Activated CD8-positive, alpha-beta T cell treated with anti-CD3 and anti-CD28 coated beads for 36 hours (primary cell): ENCODE measurements at regions of chr16 and their contacts with region 1.

Region 1: GRCh38 chr16:22077700-22078313 is 14.5 kb upstream of the VWA3A start:
- DNase-seq: peak; percentile 89
- ATAC-seq: peak; percentile 67
- H3K4me3 Mint-ChIP-seq: no peak overlapping the region
- H3K27ac Mint-ChIP-seq: no peak overlapping the region
- H3K4me1 Mint-ChIP-seq: peaks cover 2% of the 10 kb centered on the region
- H3K27me3 Mint-ChIP-seq: no peaks in the 10 kb centered on the region
- CTCF ChIP-seq: peak; percentile 93

Region 2: DNA sequence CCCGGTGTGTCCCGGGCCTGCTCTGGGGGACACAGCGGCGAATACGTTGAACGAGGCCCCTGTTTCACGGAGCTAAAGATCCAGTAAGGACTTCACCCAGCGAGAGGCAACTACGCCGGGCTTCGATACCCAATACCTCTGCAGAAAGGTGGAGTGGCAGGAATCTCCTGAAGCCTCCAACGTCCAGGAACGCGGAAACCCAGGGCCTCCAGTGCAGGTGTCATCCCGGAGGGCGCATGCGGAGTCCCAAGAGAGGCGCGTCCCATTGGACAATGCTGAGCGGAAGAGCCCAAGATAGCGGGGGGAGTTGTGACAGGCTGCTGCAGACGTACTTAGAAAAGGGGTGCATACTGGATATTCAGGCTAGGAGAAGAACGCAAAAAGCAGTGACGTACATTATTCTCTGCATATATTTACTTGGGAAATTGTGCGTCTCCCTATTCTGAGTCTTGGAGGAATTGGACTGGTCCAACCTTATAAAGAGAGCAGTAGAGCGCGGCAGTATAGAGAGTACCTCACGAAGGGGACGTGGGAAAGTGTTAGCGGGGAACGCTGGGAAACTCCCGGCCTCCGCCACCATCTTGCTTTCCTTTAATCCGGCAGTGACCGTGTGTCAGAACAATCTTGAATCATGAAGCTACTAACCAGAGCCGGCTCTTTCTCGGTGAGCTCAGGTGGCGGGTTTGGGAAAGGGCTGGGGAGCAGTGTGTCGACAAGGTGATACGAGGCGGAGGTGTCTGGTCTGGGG is 124.8 kb before region 1 on chr16 and contains the start of gene UQCRC2:
- CTCF ChIA-PET with region 1: interaction called, 19 read pairs
- POLR2A ChIA-PET with region 1: interaction called, 3 read pairs
- intact Hi-C with region 1: no loop called
- DNase-seq: peak; percentile 94
- ATAC-seq: peak; percentile 93
- H3K4me3 Mint-ChIP-seq: peak within 1 kb of the TSS; percentile 100
- H3K27ac Mint-ChIP-seq: peak within 1 kb of the TSS; percentile 98
- H3K4me1 Mint-ChIP-seq: peaks cover 53% of the 10 kb centered on the region
- H3K27me3 Mint-ChIP-seq: no peaks in the 10 kb centered on the region
- CTCF ChIP-seq: no peak
- total RNA-seq, gene UQCRC2: 356 to 383 TPM

Region 3: DNA sequence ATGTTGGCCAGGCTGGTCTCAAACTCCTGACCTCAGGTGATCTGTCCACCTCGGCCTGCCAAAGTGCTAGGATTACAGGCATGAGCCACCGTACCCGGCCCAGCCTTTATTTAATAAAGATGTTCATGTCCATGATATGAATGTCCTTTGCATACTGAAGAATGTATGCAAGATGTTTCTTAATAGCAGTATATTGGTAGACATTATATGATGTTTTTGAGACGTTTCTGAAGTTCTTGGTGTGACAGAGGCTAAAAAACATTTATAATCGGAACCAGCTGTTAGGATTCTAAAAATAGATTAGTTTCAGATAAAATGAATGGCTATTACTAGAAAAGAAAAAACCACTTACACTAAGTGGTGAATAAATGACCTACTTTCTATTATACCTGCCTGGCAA is 88.7 kb before region 1 on chr16:
- CTCF ChIA-PET with region 1: interaction called, 430 read pairs
- POLR2A ChIA-PET with region 1: no interaction called
- intact Hi-C with region 1: no loop called
- DNase-seq: no peak
- ATAC-seq: no peak
- H3K4me3 Mint-ChIP-seq: no peak overlapping the region
- H3K27ac Mint-ChIP-seq: no peak overlapping the region
- H3K4me1 Mint-ChIP-seq: peaks cover 11% of the 10 kb centered on the region
- H3K27me3 Mint-ChIP-seq: no peaks in the 10 kb centered on the region
- CTCF ChIP-seq: no peak

Region 4: DNA sequence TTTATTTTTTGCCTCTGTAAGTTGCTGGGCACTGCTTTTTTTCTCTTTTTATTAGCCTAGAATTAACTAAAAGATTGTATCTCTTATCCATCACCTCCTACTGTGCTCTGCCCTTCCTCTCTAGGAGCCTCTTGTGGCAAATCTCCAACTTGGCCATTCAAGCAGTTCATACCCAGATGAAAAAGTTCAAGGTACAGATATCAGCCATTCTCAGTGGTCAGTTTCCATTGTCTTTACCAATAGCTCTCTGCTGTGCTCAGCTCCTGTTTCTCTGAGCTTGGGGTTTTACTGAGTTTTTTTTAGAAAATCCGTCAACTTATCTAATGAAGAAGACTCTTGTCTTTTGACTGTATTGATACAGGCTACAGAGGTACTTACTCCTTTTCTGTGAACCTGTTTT is 54.3 kb before region 1 on chr16:
- CTCF ChIA-PET with region 1: interaction called, 69 read pairs
- POLR2A ChIA-PET with region 1: no interaction called
- intact Hi-C with region 1: no loop called
- DNase-seq: no peak
- ATAC-seq: no peak
- H3K4me3 Mint-ChIP-seq: no peak overlapping the region
- H3K27ac Mint-ChIP-seq: no peak overlapping the region
- H3K4me1 Mint-ChIP-seq: peaks cover 31% of the 10 kb centered on the region
- H3K27me3 Mint-ChIP-seq: no peaks in the 10 kb centered on the region
- CTCF ChIP-seq: no peak

Region 5: GRCh38 chr16:22063888-22064467 is 13.8 kb before region 1 on chr16:
- CTCF ChIA-PET with region 1: interaction called, 37 read pairs
- POLR2A ChIA-PET with region 1: no interaction called
- intact Hi-C with region 1: no loop called
- DNase-seq: no peak
- ATAC-seq: no peak
- H3K4me3 Mint-ChIP-seq: no peak overlapping the region
- H3K27ac Mint-ChIP-seq: no peak overlapping the region
- H3K4me1 Mint-ChIP-seq: peaks cover 10% of the 10 kb centered on the region
- H3K27me3 Mint-ChIP-seq: no peaks in the 10 kb centered on the region
- CTCF ChIP-seq: no peak

Region 6: DNA sequence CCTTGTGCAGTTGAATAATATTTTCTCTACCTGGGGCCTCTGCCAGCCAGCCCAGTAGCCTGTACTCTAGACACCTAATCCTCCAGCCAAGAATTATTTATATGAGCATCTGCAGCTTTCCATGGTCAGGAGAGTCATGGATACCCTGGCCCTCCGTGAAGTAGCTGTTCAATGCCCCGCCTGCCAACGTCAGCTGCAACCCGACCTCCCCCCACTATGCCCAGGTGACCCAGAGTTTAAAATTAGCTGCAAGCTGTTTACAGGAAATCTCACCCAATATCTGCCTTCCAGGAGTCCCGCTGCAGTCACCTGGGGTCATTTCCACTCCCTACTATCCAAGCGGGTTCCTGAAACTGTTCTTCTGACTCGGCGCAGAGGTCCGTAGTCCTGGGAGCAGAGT is 96.8 kb after region 1 on chr16:
- CTCF ChIA-PET with region 1: interaction called, 27 read pairs
- POLR2A ChIA-PET with region 1: no interaction called
- intact Hi-C with region 1: no loop called
- DNase-seq: no peak
- ATAC-seq: no peak
- H3K4me3 Mint-ChIP-seq: no peak overlapping the region
- H3K27ac Mint-ChIP-seq: no peak overlapping the region
- H3K4me1 Mint-ChIP-seq: no peaks in the 10 kb centered on the region
- H3K27me3 Mint-ChIP-seq: no peaks in the 10 kb centered on the region
- CTCF ChIP-seq: no peak

Region 7: DNA sequence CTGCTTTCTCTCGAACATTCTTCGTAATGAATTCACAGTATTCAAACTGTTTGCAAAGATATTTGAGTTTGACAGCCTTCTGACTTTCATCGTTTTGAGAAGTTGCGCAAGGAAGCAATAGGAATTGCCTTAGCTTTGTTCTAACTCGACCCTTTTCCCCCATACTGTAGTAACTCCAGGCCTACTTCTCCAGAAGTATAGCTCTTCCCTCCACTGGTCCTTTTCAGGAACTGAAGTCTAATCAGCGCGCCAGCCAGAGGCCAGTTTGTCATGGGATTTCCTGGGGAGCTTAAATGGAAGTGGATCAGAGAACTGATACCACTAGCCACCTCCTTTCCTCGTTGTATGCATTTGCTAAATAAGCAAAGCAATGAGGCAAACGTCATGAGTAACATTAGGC is 268.7 kb after region 1 on chr16:
- CTCF ChIA-PET with region 1: no interaction called
- POLR2A ChIA-PET with region 1: no interaction called
- intact Hi-C with region 1: no loop called
- DNase-seq: no peak
- ATAC-seq: no peak
- H3K4me3 Mint-ChIP-seq: no peak overlapping the region
- H3K27ac Mint-ChIP-seq: peak overlapping the region; percentile 9
- H3K4me1 Mint-ChIP-seq: peaks cover 5% of the 10 kb centered on the region
- H3K27me3 Mint-ChIP-seq: no peaks in the 10 kb centered on the region
- CTCF ChIP-seq: no peak